ENCODE measurements at regions of chr12 and their contacts with region 1.

Region 1: DNA sequence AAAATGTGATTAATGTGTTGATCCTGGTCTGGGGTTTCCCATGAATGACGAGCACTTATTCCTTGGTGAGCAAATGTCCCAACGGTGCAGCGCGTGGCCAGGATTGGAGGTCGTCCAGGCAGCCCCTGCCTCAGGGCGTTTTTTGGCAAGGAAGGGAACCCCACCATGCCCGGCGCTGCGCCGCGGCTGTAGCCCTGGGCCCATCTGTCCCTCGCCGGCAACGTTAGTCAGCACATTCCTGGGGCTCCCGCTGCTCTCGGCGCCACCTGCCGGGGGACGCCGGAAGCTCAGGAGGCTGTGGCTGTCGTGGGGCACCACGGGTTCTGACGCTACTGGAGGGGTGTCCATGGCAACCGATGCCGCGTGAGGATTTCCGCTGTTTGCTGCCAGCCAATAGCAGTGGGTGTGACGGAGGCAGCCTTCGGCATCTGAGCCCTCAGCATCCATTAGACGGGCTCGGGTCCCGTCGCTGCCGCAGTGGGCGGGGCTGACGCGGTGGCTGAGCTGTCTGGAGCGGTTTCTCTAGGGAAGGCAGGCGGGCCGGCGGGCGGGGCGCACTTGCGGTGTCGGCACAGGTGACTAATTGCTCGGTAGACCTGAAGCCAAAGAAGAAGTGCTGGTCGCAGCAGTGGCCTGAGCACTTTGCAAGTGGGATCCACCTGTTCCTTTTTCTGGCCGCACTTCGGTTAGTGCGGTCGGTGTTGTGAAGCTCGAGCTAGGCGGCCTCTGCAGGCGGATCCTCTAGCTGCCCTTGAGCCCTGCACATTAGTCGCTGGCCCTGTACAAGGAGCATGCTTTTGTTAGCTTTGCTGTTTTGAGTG is 29.5 kb downstream of the RAB35 start:
- DNase-seq: peak; percentile 100
- H3K4me3 Mint-ChIP-seq: peak overlapping the region; percentile 63
- H3K27ac Mint-ChIP-seq: peak overlapping the region; percentile 88
- H3K4me1 Mint-ChIP-seq: peaks cover 32% of the 10 kb centered on the region
- H3K27me3 Mint-ChIP-seq: no peaks in the 10 kb centered on the region

Region 2: GRCh38 chr12:119988782-119989668 is 98.0 kb before region 1 on chr12 and contains the start of gene BICDL1:
- CTCF ChIA-PET with region 1: interaction called, 13 read pairs
- DNase-seq: peak; percentile 98
- H3K4me3 Mint-ChIP-seq: peak within 1 kb of the TSS; percentile 85
- H3K27ac Mint-ChIP-seq: peak within 1 kb of the TSS; percentile 86
- H3K4me1 Mint-ChIP-seq: peaks cover 40% of the 10 kb centered on the region
- H3K27me3 Mint-ChIP-seq: peaks cover 6% of the 10 kb centered on the region

Region 3: DNA sequence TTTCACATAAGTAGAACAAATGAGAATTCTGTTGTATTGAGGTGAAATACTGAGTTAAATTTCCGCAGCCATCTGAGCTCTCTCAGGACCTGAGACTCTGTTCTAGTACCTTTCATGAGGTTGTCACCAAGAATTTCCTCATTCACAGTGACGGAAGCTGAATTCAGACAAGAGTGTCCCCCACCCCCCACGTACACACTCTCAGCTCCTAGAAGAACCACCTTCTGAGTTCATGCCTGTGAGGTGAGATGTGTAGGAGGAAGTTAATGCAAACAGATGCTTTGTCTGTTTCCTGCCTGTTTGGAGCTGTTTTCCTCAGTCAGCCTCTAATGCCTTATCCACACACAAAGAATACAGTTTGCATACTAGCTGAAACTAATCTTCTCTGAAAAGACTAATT is 79.7 kb before region 1 on chr12:
- CTCF ChIA-PET with region 1: interaction called, 10 read pairs
- DNase-seq: peak; percentile 85
- H3K4me3 Mint-ChIP-seq: peak overlapping the region; percentile 30
- H3K27ac Mint-ChIP-seq: peak overlapping the region; percentile 94
- H3K4me1 Mint-ChIP-seq: peaks cover 76% of the 10 kb centered on the region
- H3K27me3 Mint-ChIP-seq: no peaks in the 10 kb centered on the region

Region 4: GRCh38 chr12:120110550-120111501 is 23.8 kb after region 1 on chr12:
- CTCF ChIA-PET with region 1: interaction called, 13 read pairs
- DNase-seq: peak; percentile 73
- H3K4me3 Mint-ChIP-seq: peak overlapping the region; percentile 66
- H3K27ac Mint-ChIP-seq: peak overlapping the region; percentile 84
- H3K4me1 Mint-ChIP-seq: peaks cover 76% of the 10 kb centered on the region
- H3K27me3 Mint-ChIP-seq: no peaks in the 10 kb centered on the region

Region 5: GRCh38 chr12:120276734-120277133 is 189.7 kb after region 1 on chr12:
- CTCF ChIA-PET with region 1: no interaction called
- DNase-seq: no peak
- H3K4me3 Mint-ChIP-seq: no peak overlapping the region
- H3K27ac Mint-ChIP-seq: no peak overlapping the region
- H3K4me1 Mint-ChIP-seq: no peaks in the 10 kb centered on the region
- H3K27me3 Mint-ChIP-seq: peaks cover 21% of the 10 kb centered on the region

Measured in activated naive CD4-positive, alpha-beta T cell treated with anti-CD3 and anti-CD28 coated beads, Interleukin-2, amount 10 ng/mL, durations not matched to agents 7 days and 5 days (primary cell).